H1 (cell line): ENCODE measurements at regions of chr13 and their contacts with region 1.

Region 1: GRCh38 chr13:99436686-99437416 is 64.4 kb upstream of the TM9SF2 start:
- DNase-seq: peak; percentile 68 to 97
- H3K4me3 ChIP-seq: no peak overlapping the region
- H3K27ac ChIP-seq: no peak overlapping the region
- H3K4me1 ChIP-seq: peaks cover 8 to 26% (median 13%) of the 10 kb centered on the region in 4 experiments
- H3K27me3 ChIP-seq: no peaks in the 10 kb centered on the region
- CTCF ChIP-seq: peak; percentile 98 to 100 (median 99)
- EP300 ChIP-seq: 0 out of 3 replicates have a peak, but pooled peaks of 1 of the 2 experiments have one; percentile 10
- POLR2A ChIP-seq: no peak
- RAD21 ChIP-seq: peak; percentile 78 to 90

Region 2: DNA sequence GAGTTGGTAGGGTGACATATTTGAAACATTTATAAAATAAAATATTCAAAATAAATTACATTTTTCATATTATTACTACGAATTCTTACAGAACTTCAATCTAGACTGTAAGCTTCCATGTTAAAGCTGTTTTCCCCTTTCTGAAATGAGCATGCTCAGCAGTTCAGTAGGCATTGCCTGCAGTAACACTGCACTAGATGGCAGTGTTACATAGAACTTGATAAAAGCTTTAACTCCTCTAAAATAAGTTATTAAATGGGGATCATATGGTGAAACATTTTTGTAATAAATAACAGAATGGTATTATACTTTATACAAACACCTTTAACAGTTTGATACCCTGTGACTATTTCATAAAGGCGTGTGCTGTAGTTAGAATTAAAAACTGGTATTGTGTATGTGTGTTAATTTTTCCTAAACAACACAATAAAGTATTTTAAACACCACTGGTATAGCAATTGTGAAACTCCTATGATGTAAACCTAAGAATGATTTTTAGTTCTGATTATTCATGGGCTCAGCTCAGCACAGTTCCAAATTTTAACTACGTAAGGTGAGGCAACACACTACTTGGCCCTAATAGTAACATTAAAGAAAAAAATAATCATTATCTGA is 167.1 kb before region 1 on chr13:
- CTCF ChIA-PET with region 1: interaction called, 46 read pairs
- POLR2A ChIA-PET with region 1: no interaction called
- DNase-seq: no peak
- H3K4me3 ChIP-seq: no peak overlapping the region
- H3K27ac ChIP-seq: no peak overlapping the region
- H3K4me1 ChIP-seq: no peaks in the 10 kb centered on the region
- H3K27me3 ChIP-seq: no peaks in the 10 kb centered on the region
- CTCF ChIP-seq: peak in 2 of 3 experiments; percentile 48 to 53; a peak in 3 of 4 replicates
- EP300 ChIP-seq: no peak
- POLR2A ChIP-seq: no peak
- RAD21 ChIP-seq: peak; percentile 63 to 66

Region 3: DNA sequence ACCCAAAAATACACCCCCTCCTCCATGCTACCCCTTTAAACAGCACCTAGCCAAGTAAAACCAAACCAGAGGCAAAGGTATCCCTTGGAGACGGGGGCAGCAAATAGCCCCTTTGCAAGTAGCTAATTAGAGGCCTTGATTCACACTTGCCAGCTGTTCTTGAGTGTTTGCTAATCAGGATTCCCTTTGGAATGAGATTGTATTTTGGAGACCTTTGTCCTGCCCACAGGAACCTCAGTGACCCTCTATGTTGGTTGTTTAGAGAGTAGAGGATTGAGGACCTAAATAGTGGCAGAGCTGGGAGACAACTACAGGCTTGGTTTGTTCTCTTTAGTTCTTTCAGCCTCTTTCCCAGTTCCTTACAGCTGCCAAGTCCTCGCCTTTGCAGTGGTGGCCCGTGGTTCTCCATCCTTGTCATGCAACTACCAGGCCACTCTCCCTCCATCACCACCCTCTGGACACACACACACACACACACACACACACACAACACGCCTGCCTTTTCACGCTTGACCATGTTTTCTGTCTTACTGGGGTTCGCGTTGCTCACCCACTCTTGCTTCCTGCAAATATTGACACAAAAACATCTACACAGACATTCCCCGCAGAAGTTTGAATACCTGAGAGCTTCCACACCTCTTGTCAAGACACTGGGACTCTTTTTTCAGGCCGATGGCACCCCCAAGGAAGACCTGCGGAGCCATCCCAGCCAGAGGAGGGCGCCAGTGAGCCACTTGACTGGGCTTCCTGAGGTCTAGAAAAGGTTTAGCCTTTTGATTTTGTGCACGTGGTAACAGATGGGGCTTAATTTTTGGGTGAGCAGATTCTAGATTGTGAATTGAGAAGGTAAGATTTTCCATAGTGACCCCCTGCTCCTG is 49.7 kb before region 1 on chr13:
- CTCF ChIA-PET with region 1: interaction called, 227 read pairs
- POLR2A ChIA-PET with region 1: no interaction called
- DNase-seq: peak; percentile 31 to 95
- H3K4me3 ChIP-seq: no peak overlapping the region
- H3K27ac ChIP-seq: no peak overlapping the region
- H3K4me1 ChIP-seq: peaks cover 0 to 14% (median 3%) of the 10 kb centered on the region in 4 experiments; a peak in 3 of 7 replicates
- H3K27me3 ChIP-seq: no peaks in the 10 kb centered on the region
- CTCF ChIP-seq: peak; percentile 88 to 98 (median 88)
- EP300 ChIP-seq: no peak
- POLR2A ChIP-seq: no peak
- RAD21 ChIP-seq: peak; percentile 85 to 90

Region 4: GRCh38 chr13:99417201-99418102 is 19.4 kb before region 1 on chr13:
- CTCF ChIA-PET with region 1: interaction called, 64 read pairs
- POLR2A ChIA-PET with region 1: interaction called, 3 read pairs
- DNase-seq: no peak
- H3K4me3 ChIP-seq: peak overlapping the region in 1 of 4 experiments; percentile 1; a peak in 1 of 8 replicates
- H3K27ac ChIP-seq: no peak overlapping the region
- H3K4me1 ChIP-seq: peaks cover 0 to 13% (median 9%) of the 10 kb centered on the region in 4 experiments; a peak in 5 of 7 replicates
- H3K27me3 ChIP-seq: no peaks in the 10 kb centered on the region
- CTCF ChIP-seq: no peak
- EP300 ChIP-seq: no peak
- POLR2A ChIP-seq: no peak
- RAD21 ChIP-seq: no peak

Region 5: DNA sequence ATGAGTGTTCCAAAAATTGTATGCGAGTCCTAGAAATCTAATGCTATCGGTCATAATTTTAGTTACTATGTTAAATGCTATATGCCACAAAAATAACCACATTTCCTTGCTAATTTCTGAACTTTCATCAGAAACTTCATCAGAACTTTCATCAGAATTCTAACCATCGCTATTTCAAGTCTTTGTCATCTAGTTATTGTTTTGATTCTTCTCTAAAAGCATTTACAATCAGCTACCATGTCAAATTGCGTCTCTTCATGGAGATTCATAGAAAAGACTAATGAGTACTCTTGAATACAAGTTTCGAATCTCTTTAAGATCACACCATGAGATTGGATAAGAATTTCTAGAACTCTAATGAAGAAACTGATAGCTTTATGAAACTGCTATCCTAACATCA is 11.7 kb after region 1 on chr13:
- CTCF ChIA-PET with region 1: interaction called, 22 read pairs
- POLR2A ChIA-PET with region 1: no interaction called
- DNase-seq: no peak
- H3K4me3 ChIP-seq: no peak overlapping the region
- H3K27ac ChIP-seq: no peak overlapping the region
- H3K4me1 ChIP-seq: no peaks in the 10 kb centered on the region; a peak in 2 of 7 replicates
- H3K27me3 ChIP-seq: no peaks in the 10 kb centered on the region
- CTCF ChIP-seq: no peak
- EP300 ChIP-seq: no peak
- POLR2A ChIP-seq: no peak
- RAD21 ChIP-seq: no peak

Region 6: DNA sequence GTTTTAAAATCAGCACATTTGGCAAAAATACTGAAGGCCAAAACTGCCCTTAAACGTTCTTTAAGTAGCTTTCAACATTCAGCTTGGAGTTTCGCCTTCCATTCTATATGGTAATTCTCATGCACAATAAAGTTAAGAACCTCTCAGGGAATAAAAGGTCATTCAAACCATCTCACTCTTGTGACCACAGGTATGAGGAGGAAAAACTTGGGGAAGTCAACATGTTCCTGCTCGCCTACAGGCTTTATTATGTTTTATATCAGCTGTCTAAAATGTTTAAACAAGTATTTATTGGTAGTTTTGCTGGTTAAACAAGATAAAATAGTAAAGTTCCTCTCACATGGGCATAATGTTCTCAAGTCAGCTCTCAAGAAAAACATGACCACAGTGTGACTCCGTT is 44.5 kb after region 1 on chr13:
- CTCF ChIA-PET with region 1: interaction called, 12 read pairs
- POLR2A ChIA-PET with region 1: no interaction called
- DNase-seq: no peak
- H3K4me3 ChIP-seq: no peak overlapping the region
- H3K27ac ChIP-seq: no peak overlapping the region
- H3K4me1 ChIP-seq: peaks cover 0 to 4% (median 2%) of the 10 kb centered on the region in 4 experiments; a peak in 4 of 7 replicates
- H3K27me3 ChIP-seq: no peaks in the 10 kb centered on the region
- CTCF ChIP-seq: no peak
- EP300 ChIP-seq: no peak
- POLR2A ChIP-seq: no peak
- RAD21 ChIP-seq: no peak